ENCODE measurements at regions of chr6 and their contacts with region 1.

Region 1: GRCh38 chr6:109436041-109436440 is 4.4 kb downstream of the PPIL6 start:
- DNase-seq: no peak
- ATAC-seq: no peak

Region 2: DNA sequence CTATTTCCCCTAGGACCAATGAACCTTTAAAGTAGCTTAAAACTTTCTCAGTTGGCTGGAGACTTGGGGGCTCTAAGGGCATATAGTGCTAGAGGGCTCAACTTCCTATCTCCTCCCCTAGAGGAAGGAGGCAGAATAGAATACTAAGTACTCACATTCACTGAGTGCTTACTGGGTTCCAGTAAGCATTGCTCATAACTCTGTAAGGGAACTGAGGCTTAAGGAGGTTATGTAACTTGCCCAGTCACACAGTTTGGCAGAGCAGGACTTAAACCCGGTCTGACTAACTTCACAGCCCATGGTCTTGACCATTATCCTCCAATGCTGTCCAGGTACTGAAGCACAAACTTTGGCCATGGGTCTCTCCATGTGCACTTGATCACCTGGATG is 353.9 kb before region 1 on chr6:
- intact Hi-C with region 1: no loop called
- DNase-seq: no peak
- ATAC-seq: peak in 1 of 2 donors; percentile 60

Region 3: DNA sequence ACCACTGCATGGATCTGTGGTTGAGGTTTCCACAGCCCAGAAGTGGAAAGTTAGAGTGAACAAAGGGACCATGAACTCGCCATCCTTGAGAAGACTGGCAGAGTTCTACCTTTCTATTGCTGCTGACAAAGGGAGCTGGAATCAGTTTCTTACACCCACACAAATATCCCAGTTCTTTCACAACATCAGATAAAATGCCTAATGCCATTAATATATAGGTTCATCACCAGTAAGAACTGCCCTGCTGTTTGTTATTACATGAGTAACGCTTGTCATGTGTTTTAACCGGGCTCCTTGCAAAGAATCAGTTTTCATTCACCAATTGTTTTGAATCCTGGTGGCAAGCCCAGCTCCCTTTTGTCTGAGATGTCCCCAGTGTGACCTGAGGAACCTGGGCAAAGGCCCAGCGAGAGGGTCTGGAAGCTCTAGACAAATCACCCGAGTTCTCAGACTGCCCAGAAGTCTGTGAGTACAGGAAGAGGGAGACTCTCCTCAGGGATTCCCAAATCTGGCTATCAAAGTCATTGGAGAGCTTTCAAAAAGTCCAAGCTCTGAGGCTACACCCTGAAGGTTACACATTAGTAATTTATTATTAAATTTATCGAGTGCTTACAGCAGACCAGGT is 46.3 kb before region 1 on chr6:
- intact Hi-C with region 1: loop called in 1 of 2 experiments (anchors 5 kb)
- DNase-seq: no peak
- ATAC-seq: peak; percentile 40 to 49